ENCODE measurements at regions of chr1 and their contacts with region 1.

Region 1: GRCh38 chr1:180168786-180169639 is 14.3 kb downstream of the QSOX1 start:
- DNase-seq: peak; percentile 53
- H3K4me3 ChIP-seq: no peak overlapping the region
- H3K27ac ChIP-seq: no peak overlapping the region
- H3K4me1 ChIP-seq: no peaks in the 10 kb centered on the region
- CTCF ChIP-seq: peak; percentile 77

Region 2: DNA sequence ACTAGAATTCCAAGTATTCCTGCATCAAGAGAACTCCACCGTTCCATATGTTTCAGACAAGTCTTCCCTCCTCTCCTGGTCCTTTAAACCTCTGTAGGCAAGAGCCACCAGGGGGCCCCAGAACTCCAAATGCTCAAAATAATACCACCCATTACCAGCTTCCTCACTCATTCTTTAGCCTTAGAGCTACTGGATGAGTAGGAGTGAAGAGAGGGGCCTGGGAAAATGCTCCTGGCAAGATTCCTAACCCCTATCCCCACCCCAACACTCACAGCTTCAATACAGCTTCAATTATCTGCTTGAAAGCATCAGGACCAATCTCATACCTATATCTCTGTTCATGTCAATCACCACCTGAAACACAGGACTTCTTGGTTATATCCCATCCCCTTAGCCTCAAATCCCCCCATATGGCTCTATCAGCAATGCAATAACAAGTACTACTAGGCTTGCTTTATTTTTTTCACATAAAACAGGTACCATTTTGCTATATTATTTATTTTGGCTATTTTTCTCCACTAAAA is 301.1 kb before region 1 on chr1:
- CTCF ChIA-PET with region 1: interaction called, 9 read pairs
- POLR2A ChIA-PET with region 1: no interaction called
- intact Hi-C with region 1: loop called (anchors 2 kb)
- DNase-seq: peak; percentile 64
- H3K4me3 ChIP-seq: no peak overlapping the region
- H3K27ac ChIP-seq: no peak overlapping the region
- H3K4me1 ChIP-seq: peaks cover 22% of the 10 kb centered on the region
- CTCF ChIP-seq: peak; percentile 94